ENCODE measurements at regions of chr20 and their contacts with region 1.

Region 1: DNA sequence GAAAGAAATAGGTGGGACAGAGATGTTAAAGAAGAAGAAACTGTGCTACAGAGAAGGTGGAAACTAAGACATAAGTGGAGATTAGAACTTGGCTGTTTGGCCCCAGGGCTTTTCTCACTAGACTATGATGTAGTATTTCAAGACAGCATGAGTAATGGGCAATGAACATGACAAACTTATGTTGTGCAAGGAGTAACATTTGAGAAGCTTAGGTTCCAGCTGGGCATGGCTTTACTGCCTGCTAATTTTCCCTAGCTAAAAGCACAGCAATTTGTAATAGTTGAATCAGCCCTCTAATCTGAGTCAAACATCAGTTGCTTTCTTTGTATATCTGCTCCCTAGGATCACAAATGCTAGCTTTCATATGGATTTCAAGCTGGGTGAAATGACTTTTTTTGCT is 294.3 kb upstream of the BMP2 start:
- DNase-seq: peak; percentile 88
- H3K4me3 ChIP-seq: no peak overlapping the region
- H3K27ac ChIP-seq: no peak overlapping the region
- H3K4me1 ChIP-seq: peaks cover 8% of the 10 kb centered on the region
- H3K27me3 ChIP-seq: no peaks in the 10 kb centered on the region
- CTCF ChIP-seq: no peak

Region 2: GRCh38 chr20:6381887-6382286 is 91.3 kb before region 1 on chr20:
- CTCF ChIA-PET with region 1: no interaction called
- dilution Hi-C with region 1: loop called (anchors 5 kb)
- in situ Hi-C with region 1: no loop called
- intact Hi-C with region 1: no loop called
- DNase-seq: peak; percentile 8
- H3K4me3 ChIP-seq: no peak overlapping the region
- H3K27ac ChIP-seq: no peak overlapping the region
- H3K4me1 ChIP-seq: no peaks in the 10 kb centered on the region
- H3K27me3 ChIP-seq: no peaks in the 10 kb centered on the region
- CTCF ChIP-seq: peak; percentile 60 to 70

Region 3: GRCh38 chr20:6439737-6440442 is 33.3 kb before region 1 on chr20:
- CTCF ChIA-PET with region 1: no interaction called
- dilution Hi-C with region 1: loop called (anchors 5 kb)
- in situ Hi-C with region 1: no loop called
- intact Hi-C with region 1: no loop called
- DNase-seq: no peak
- H3K4me3 ChIP-seq: no peak overlapping the region
- H3K27ac ChIP-seq: no peak overlapping the region
- H3K4me1 ChIP-seq: no peaks in the 10 kb centered on the region
- H3K27me3 ChIP-seq: no peaks in the 10 kb centered on the region
- CTCF ChIP-seq: no peak

Measured in mammary epithelial cell (primary cell).